ENCODE measurements at regions of chr20 and their contacts with region 1.

Region 1: GRCh38 chr20:34312544-34313217 is 9.5 kb upstream of the AHCY start:
- DNase-seq: peak; percentile 94
- H3K4me3 Mint-ChIP-seq: no peak overlapping the region
- H3K27ac Mint-ChIP-seq: no peak overlapping the region
- H3K4me1 Mint-ChIP-seq: peaks cover 6% of the 10 kb centered on the region
- H3K27me3 Mint-ChIP-seq: peaks cover 19% of the 10 kb centered on the region

Region 2: GRCh38 chr20:34324541-34324940 is 11.9 kb after region 1 on chr20:
- CTCF ChIA-PET with region 1: interaction called, 29 read pairs
- POLR2A ChIA-PET with region 1: no interaction called
- intact Hi-C with region 1: no loop called
- DNase-seq: no peak
- H3K4me3 Mint-ChIP-seq: no peak overlapping the region
- H3K27ac Mint-ChIP-seq: no peak overlapping the region
- H3K4me1 Mint-ChIP-seq: no peaks in the 10 kb centered on the region
- H3K27me3 Mint-ChIP-seq: peaks cover 2% of the 10 kb centered on the region

Region 3: GRCh38 chr20:34415079-34415478 is 102.4 kb after region 1 on chr20:
- CTCF ChIA-PET with region 1: interaction called, 23 read pairs
- POLR2A ChIA-PET with region 1: no interaction called
- intact Hi-C with region 1: no loop called
- DNase-seq: no peak
- H3K4me3 Mint-ChIP-seq: no peak overlapping the region
- H3K27ac Mint-ChIP-seq: peak overlapping the region; percentile 3
- H3K4me1 Mint-ChIP-seq: peaks cover 19% of the 10 kb centered on the region
- H3K27me3 Mint-ChIP-seq: no peaks in the 10 kb centered on the region

Region 4: DNA sequence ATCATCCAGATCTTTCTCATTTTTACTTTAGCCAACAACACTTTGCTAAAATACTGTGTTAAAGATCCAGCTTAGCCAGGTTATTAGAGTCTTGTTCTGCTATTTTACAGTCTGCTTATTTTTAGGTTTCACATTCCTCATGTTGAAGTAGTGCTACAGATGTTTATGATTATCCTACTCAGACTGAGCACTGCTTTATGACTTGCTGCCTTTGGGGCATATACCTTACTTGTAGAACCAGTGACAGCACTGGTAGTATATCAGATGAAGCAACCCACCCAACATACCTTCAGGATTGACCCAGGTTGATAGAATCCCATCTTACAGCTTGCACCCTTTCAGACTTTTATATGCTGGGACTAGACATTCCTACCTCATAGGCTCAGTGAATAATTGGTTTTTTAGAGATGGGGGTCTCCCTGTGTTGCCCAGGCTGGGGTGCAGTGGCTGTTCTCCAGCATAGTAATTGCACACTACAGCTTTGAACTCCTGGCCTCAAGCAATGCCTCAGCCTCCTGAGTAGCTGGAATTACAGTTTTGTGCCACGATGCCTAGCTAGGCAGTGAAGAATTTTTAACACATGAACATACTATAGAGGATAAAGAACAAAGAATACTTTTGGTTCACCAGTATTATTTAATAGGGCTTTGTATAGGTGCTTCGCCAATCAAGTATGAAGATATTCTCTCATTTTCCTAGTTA is 139.8 kb after region 1 on chr20:
- CTCF ChIA-PET with region 1: interaction called, 25 read pairs
- POLR2A ChIA-PET with region 1: no interaction called
- intact Hi-C with region 1: no loop called
- DNase-seq: no peak
- H3K4me3 Mint-ChIP-seq: no peak overlapping the region
- H3K27ac Mint-ChIP-seq: no peak overlapping the region
- H3K4me1 Mint-ChIP-seq: peaks cover 8% of the 10 kb centered on the region
- H3K27me3 Mint-ChIP-seq: no peaks in the 10 kb centered on the region

Region 5: DNA sequence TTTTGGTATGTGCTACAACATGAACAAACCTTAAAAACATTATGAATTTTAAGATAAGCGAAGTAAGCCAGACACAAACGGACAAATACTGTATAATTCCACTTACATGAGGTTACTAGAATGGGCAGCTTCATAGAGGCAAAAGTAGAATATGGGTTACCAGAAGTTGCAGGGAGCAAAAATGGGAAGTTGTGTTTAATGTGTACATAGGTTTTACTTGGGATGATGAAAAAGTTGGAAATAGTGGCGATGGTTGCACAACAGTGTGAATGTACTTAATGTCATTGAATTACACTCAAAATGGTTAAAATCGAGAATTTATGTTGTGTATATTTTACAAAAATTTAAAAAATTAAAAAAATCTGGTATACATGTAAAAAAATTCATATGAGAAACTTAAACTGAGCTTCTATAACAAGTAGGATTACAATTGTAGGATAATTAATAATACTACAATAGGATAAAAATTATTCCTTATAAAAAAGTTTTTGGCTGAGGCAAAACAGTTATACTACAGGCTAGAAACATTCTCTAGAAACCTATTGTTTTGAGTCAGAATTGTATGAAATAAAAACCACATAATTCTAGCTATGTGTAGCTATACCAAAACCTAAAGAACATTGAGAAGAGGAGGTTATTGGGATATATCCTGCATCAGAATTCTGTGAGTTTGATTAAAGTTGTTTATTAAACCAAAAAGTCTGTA is 178.7 kb after region 1 on chr20:
- CTCF ChIA-PET with region 1: interaction called, 13 read pairs
- POLR2A ChIA-PET with region 1: no interaction called
- intact Hi-C with region 1: no loop called
- DNase-seq: no peak
- H3K4me3 Mint-ChIP-seq: no peak overlapping the region
- H3K27ac Mint-ChIP-seq: no peak overlapping the region
- H3K4me1 Mint-ChIP-seq: peaks cover 2% of the 10 kb centered on the region
- H3K27me3 Mint-ChIP-seq: no peaks in the 10 kb centered on the region

Region 6: GRCh38 chr20:34529742-34530141 is 217.1 kb after region 1 on chr20:
- CTCF ChIA-PET with region 1: interaction called, 98 read pairs
- POLR2A ChIA-PET with region 1: no interaction called
- intact Hi-C with region 1: no loop called
- DNase-seq: no peak
- H3K4me3 Mint-ChIP-seq: no peak overlapping the region
- H3K27ac Mint-ChIP-seq: no peak overlapping the region
- H3K4me1 Mint-ChIP-seq: peaks cover 3% of the 10 kb centered on the region
- H3K27me3 Mint-ChIP-seq: no peaks in the 10 kb centered on the region

Region 7: GRCh38 chr20:34768096-34768495 is 455.4 kb after region 1 on chr20:
- CTCF ChIA-PET with region 1: interaction called, 35 read pairs
- POLR2A ChIA-PET with region 1: no interaction called
- intact Hi-C with region 1: loop called (anchors 5 kb)
- DNase-seq: no peak
- H3K4me3 Mint-ChIP-seq: no peak overlapping the region
- H3K27ac Mint-ChIP-seq: no peak overlapping the region
- H3K4me1 Mint-ChIP-seq: no peaks in the 10 kb centered on the region
- H3K27me3 Mint-ChIP-seq: no peaks in the 10 kb centered on the region

Measured in activated CD4-positive, alpha-beta memory T cell treated with anti-CD3 and anti-CD28 coated beads for 36 hours (primary cell).